Dendritic cell treated with granulocyte-macrophage colony-stimulating factor and Interleukin-4, amounts not matched to agents 40 ng/mL and 50 ng/mL, for 4 days (primary cell): ENCODE measurements at regions of chr9 and their contacts with region 1.

Region 1: GRCh38 chr9:90142580-90142979 is 500.0 kb downstream of the DIRAS2 start:
- H3K4me3 Mint-ChIP-seq: no peak overlapping the region
- H3K27ac Mint-ChIP-seq: no peak overlapping the region
- H3K4me1 Mint-ChIP-seq: peaks cover 7% of the 10 kb centered on the region
- H3K27me3 Mint-ChIP-seq: peaks cover 3% of the 10 kb centered on the region

Region 2: GRCh38 chr9:90219548-90220118 is 77.1 kb after region 1 on chr9:
- intact Hi-C with region 1: loop called (anchors 1 kb)
- H3K4me3 Mint-ChIP-seq: peak overlapping the region; percentile 26
- H3K27ac Mint-ChIP-seq: peak overlapping the region; percentile 61
- H3K4me1 Mint-ChIP-seq: peaks cover 16% of the 10 kb centered on the region
- H3K27me3 Mint-ChIP-seq: peaks cover 6% of the 10 kb centered on the region

Region 3: DNA sequence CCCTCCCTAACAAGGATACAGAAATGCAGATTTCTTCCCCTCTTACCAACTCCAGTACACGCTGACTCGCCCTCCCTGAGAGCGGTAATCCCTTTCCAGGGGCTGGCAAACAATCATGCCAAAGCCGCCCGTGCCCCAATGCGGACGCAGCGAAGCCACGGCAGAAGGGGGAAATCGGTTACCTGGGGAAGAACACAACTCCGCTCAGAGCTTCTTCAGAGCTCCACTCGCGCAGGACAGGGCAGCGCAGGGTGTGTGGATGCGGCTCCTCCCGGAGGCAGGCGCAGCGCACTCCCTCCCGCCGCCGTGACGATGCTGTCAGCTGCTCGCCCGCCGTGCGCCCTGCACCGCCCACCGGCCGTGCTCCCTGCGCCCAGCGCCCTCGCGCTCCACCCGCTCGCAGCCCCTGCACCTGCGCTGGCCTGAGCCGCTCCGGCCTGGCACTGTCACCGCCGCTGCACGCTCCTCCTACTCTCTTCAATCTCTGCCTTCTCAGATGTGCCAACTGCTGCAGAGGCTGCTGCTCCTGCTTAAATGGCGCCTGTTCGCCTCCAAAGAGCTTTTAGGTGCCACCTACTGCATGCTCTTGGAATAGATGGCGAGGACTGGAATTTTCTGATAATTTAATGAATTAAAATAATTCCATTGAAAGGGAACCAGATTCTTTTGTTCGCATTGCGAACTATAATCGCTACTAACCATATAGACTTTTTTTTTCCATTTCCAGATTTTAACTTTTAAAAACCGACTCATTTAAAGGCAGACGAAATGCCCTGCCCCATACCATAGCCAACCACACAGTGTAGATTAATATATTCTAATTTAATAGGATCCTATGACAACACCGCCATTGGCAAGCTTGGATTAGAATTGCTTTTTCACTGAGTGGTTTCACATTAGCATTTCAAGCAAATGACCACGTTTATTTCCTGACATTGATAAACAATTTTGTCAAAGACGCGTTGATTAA is 500.3 kb after region 1 on chr9 and contains the start of gene DIRAS2:
- intact Hi-C with region 1: loop called (anchors 10 kb)
- H3K4me3 Mint-ChIP-seq: peak within 1 kb of the TSS; percentile 77
- H3K27ac Mint-ChIP-seq: no peak within 1 kb of the TSS
- H3K4me1 Mint-ChIP-seq: no peaks in the 10 kb centered on the region
- H3K27me3 Mint-ChIP-seq: peaks cover 61% of the 10 kb centered on the region

Region 4: GRCh38 chr9:90773617-90774016 is 631.0 kb after region 1 on chr9:
- intact Hi-C with region 1: loop called (anchors 5 kb)
- H3K4me3 Mint-ChIP-seq: no peak overlapping the region
- H3K27ac Mint-ChIP-seq: peak overlapping the region; percentile 39
- H3K4me1 Mint-ChIP-seq: peaks cover 60% of the 10 kb centered on the region
- H3K27me3 Mint-ChIP-seq: no peaks in the 10 kb centered on the region